HAP-1 (cell line): ENCODE measurements at regions of chr14 and their contacts with region 1.

Region 1: GRCh38 chr14:34875031-34875922 is at the start of gene BAZ1A:
- DNase-seq: peak; percentile 81 to 98
- H3K4me3 ChIP-seq: peak within 1 kb of the TSS; percentile 91
- H3K4me1 ChIP-seq: peaks cover 8% of the 10 kb centered on the region
- H3K27me3 ChIP-seq: no peaks in the 10 kb centered on the region

Region 2: GRCh38 chr14:34722717-34723545 is 152.3 kb before region 1 on chr14:
- in situ Hi-C with region 1: no loop called
- DNase-seq: peak; percentile 59 to 64
- H3K4me3 ChIP-seq: no peak overlapping the region
- H3K4me1 ChIP-seq: peaks cover 3% of the 10 kb centered on the region
- H3K27me3 ChIP-seq: no peaks in the 10 kb centered on the region

Region 3: GRCh38 chr14:35107866-35108265 is 232.6 kb after region 1 on chr14:
- in situ Hi-C with region 1: no loop called
- DNase-seq: no peak
- H3K4me3 ChIP-seq: no peak overlapping the region
- H3K4me1 ChIP-seq: peaks cover 1% of the 10 kb centered on the region
- H3K27me3 ChIP-seq: no peaks in the 10 kb centered on the region

Region 4: DNA sequence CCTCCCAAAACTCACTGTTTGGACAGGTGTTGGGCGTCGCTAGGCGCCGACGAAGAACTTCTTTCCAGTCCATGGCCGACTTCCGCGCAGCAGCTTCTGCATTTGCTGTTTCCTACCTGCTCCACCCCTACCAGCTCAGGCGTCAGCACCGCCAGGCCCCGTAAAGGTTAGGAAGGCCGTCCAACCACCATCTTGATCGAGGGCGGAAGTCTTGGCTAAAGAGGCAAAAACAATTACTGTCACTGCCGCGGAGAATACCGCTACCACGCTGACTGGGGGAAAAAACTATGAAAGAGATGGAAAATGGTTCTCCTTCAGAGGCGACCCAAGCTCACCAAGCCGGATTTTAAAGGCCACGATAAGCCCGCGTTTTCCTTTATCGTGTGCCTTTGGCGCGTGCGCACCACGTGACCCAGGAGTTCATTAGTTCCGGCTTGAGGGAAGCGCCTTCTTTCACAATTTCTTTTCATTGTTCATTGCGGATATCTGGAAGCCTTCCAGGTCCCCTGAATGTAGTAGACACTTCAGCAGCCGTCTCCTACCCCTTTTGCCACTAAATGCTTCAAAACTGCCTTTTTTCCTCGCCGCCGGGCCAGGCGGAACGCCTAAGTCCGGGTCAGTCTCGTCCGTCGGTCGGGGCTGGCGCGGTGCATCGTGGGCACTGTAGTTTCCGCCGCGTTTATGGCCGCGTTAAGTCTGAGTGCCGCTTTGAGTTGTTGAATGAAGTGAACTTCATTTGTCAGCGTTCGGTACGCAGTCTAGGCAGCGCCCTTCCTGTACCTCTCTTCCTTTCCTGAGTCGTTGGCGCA is 246.8 kb after region 1 on chr14 and contains the starts of genes PPP2R3C and PRORP:
- in situ Hi-C with region 1: loop called (anchors 10 kb)
- DNase-seq: peak; percentile 90 to 95
- H3K4me3 ChIP-seq: peak within 1 kb of the TSS; percentile 59
- H3K4me1 ChIP-seq: peaks cover 10% of the 10 kb centered on the region; the same call in 1 of the 2 replicates
- H3K27me3 ChIP-seq: no peaks in the 10 kb centered on the region